CD4-positive, alpha-beta T cell (primary cell): ENCODE measurements at regions of chr17 and their contacts with region 1.

Region 1: GRCh38 chr17:38982858-38983746 is 15.9 kb upstream of the FBXO47 start:
- DNase-seq: peak in 12 of 14 experiments; percentile 12 to 81 (median 38)
- ATAC-seq: peak; percentile 83
- H3K4me3 ChIP-seq: no peak overlapping the region
- H3K4me3 Mint-ChIP-seq: no peak overlapping the region
- H3K27ac ChIP-seq: no peak overlapping the region
- H3K27ac Mint-ChIP-seq: no peak overlapping the region
- H3K4me1 ChIP-seq: peaks cover 2% of the 10 kb centered on the region
- H3K4me1 Mint-ChIP-seq: peaks cover 6% of the 10 kb centered on the region
- H3K27me3 ChIP-seq: no peaks in the 10 kb centered on the region
- H3K27me3 Mint-ChIP-seq: no peaks in the 10 kb centered on the region
- CTCF ChIP-seq: peak; percentile 90

Region 2: GRCh38 chr17:38701504-38702165 is 281.5 kb before region 1 on chr17:
- CTCF ChIA-PET with region 1: no interaction called
- POLR2A ChIA-PET with region 1: no interaction called
- intact Hi-C with region 1: no loop called
- DNase-seq: peak; percentile 31 to 94 (median 55)
- ATAC-seq: peak; percentile 31
- H3K4me3 ChIP-seq: peak overlapping the region; percentile 73
- H3K4me3 Mint-ChIP-seq: peak overlapping the region; percentile 85
- H3K27ac ChIP-seq: peak overlapping the region; percentile 94 to 97
- H3K27ac Mint-ChIP-seq: peak overlapping the region; percentile 88
- H3K4me1 ChIP-seq: peaks cover 61% of the 10 kb centered on the region
- H3K4me1 Mint-ChIP-seq: peaks cover 50% of the 10 kb centered on the region
- H3K27me3 ChIP-seq: no peaks in the 10 kb centered on the region
- H3K27me3 Mint-ChIP-seq: no peaks in the 10 kb centered on the region
- CTCF ChIP-seq: no peak

Region 3: DNA sequence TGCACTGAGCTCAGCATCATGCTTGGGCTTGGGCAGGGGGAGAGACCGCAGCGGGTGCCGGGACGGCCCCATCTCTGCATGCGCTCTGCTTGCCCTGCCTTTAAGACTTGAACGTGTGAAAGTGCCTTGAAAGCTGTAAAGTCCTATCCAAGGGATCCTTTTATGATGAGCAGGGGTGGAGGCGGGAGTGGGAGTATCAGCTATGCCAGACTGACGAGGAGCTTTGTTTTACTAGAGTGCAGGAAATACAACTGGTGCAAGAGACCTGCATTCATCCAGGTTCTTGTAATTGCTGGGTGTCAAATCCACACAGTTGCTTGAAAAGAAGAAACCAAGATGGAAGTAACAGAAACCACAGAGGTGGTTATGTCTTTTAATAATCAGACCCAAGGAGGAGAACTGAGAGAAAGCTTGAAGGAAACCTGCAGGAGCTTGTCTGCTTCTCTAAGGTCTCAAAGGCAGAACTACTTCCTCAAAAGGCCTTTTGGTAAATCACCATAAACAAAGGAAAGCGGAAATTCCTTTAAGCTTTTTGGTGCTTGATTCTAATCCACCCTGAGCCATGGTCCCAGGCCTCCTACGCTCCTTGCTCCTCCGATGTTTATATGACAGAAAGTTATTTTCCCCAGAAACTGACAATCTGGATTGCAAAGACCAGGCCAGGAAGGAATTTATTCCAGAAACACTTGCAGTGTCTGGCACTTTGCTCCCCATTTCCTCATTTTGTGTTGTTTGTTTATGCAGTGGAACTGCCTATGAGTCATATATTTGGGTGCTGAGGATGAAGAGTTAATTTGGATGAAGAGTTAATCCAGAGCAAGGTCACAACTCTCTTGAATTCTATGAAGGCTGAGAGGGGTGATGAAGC is 35.4 kb after region 1 on chr17:
- CTCF ChIA-PET with region 1: no interaction called
- POLR2A ChIA-PET with region 1: interaction called, 15 read pairs
- intact Hi-C with region 1: no loop called
- DNase-seq: peak in 4 of 14 experiments; percentile 15 to 34 (median 24)
- ATAC-seq: peak; percentile 28
- H3K4me3 ChIP-seq: no peak overlapping the region
- H3K4me3 Mint-ChIP-seq: peak overlapping the region; percentile 11
- H3K27ac ChIP-seq: peak overlapping the region; percentile 23 to 37
- H3K27ac Mint-ChIP-seq: peak overlapping the region; percentile 92
- H3K4me1 ChIP-seq: peaks cover 31% of the 10 kb centered on the region
- H3K4me1 Mint-ChIP-seq: peaks cover 33% of the 10 kb centered on the region
- H3K27me3 ChIP-seq: no peaks in the 10 kb centered on the region
- H3K27me3 Mint-ChIP-seq: no peaks in the 10 kb centered on the region
- CTCF ChIP-seq: no peak

Region 4: GRCh38 chr17:39094607-39095308 is 111.7 kb after region 1 on chr17:
- CTCF ChIA-PET with region 1: interaction called, 3 read pairs
- POLR2A ChIA-PET with region 1: interaction called, 4 read pairs
- intact Hi-C with region 1: loop called (anchors 2 to 5 kb)
- DNase-seq: peak in 10 of 14 experiments; percentile 15 to 77 (median 36)
- ATAC-seq: peak; percentile 42
- H3K4me3 ChIP-seq: no peak overlapping the region
- H3K4me3 Mint-ChIP-seq: peak overlapping the region; percentile 78
- H3K27ac ChIP-seq: peak overlapping the region; percentile 55 to 58
- H3K27ac Mint-ChIP-seq: peak overlapping the region; percentile 94
- H3K4me1 ChIP-seq: peaks cover 93% of the 10 kb centered on the region
- H3K4me1 Mint-ChIP-seq: peaks cover 90% of the 10 kb centered on the region
- H3K27me3 ChIP-seq: no peaks in the 10 kb centered on the region
- H3K27me3 Mint-ChIP-seq: no peaks in the 10 kb centered on the region
- CTCF ChIP-seq: no peak

Region 5: DNA sequence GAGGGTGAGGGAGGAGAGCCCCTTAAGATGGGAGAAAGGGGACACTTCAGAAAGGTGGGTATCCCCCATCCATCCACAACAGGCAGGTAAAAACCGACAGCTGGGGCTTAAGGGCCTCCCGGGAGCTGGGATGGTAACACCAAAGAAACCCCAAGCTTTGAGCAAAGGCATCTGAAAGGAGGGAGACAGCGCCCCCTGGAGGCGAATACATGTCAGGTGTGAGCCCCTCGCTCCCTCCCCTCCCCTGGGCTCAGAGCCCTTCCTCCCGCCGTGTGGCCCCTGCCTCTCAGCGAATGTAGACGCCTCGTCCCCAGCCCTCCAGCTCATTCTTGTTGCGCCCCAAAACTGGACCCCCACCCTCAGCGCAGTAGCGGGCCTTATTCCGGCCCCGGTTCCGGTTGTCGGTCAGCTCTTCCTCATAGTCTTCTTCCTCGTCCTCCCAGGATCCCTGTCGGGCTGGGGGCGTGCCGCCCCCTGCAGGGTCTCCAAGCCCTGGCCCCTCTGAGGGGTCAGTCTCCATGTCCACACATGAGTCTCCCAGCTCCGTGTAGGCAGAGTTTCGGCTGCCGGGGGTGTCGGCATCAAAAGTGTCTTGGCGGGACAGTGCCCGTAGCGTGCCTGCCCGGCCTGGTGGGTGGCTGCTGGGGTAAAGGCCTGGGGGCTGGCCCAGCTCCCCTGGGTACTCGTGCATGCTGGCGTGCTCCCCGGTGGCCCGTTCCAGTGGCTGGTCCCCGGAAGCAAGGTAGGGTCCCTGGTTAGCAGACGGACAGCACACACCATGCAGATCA is 192.0 kb after region 1 on chr17:
- CTCF ChIA-PET with region 1: interaction called, 63 read pairs
- POLR2A ChIA-PET with region 1: interaction called, 9 read pairs
- intact Hi-C with region 1: loop called (anchors 1 kb)
- DNase-seq: peak; percentile 67 to 91 (median 74)
- ATAC-seq: peak; percentile 95
- H3K4me3 ChIP-seq: no peak overlapping the region
- H3K4me3 Mint-ChIP-seq: no peak overlapping the region
- H3K27ac ChIP-seq: no peak overlapping the region
- H3K27ac Mint-ChIP-seq: no peak overlapping the region
- H3K4me1 ChIP-seq: peaks cover 22% of the 10 kb centered on the region
- H3K4me1 Mint-ChIP-seq: peaks cover 22% of the 10 kb centered on the region
- H3K27me3 ChIP-seq: no peaks in the 10 kb centered on the region
- H3K27me3 Mint-ChIP-seq: no peaks in the 10 kb centered on the region
- CTCF ChIP-seq: peak; percentile 82

Region 6: DNA sequence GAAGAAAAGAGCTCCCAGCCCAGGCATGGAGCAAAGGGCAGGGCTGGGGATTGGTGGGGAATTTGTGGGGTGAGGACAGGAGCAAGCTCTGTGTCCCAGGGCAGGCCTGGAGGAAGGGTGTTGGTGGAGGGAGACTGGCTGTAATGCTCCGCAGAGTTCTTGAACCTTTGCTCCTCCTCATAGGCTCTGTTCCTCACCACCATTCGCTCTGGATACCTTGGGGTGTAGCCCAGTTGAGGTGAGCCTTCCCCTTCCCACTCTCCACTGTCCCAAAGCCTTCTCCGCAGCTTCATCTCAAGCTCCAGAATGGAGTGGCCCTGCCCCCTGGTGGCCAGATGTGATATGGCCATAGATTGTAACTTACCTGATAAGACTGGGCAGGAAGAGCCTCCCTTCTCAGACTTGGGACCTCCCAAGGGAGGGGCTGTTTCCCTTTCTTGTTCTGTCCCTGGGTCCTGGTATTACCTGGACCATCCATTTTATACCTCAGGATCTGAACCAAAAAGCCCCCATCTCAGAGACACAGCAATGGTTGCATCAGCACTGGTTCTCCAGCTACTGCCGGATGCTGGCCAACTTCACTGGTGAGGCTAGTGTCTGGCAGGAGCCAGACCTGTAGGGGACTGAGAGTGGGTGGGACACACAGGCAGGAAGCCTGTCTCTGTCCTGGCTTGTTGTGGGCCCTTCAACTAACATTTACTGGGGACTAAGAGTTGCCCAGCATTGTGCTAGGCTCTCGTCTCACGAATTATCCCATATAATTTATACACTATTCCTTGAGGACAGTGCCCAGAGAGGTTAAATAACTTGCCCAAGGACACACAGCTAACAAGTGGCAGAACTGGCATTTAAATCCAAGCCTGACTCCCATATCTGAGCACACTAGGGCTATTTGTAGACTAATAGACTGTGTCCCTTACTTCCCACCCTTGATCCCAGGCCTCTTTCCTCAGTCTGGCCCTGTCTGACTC is 261.8 kb after region 1 on chr17:
- CTCF ChIA-PET with region 1: interaction called, 8 read pairs
- POLR2A ChIA-PET with region 1: interaction called, 4 read pairs
- intact Hi-C with region 1: loop called in 1 of 2 experiments (anchors 2 kb)
- DNase-seq: peak; percentile 78 to 94 (median 85)
- ATAC-seq: peak; percentile 96
- H3K4me3 ChIP-seq: no peak overlapping the region
- H3K4me3 Mint-ChIP-seq: peak overlapping the region; percentile 31
- H3K27ac ChIP-seq: no peak overlapping the region
- H3K27ac Mint-ChIP-seq: peak overlapping the region; percentile 53
- H3K4me1 ChIP-seq: peaks cover 15% of the 10 kb centered on the region
- H3K4me1 Mint-ChIP-seq: peaks cover 9% of the 10 kb centered on the region
- H3K27me3 ChIP-seq: no peaks in the 10 kb centered on the region
- H3K27me3 Mint-ChIP-seq: peaks cover 4% of the 10 kb centered on the region
- CTCF ChIP-seq: peak; percentile 94